ENCODE measurements at regions of chr10 and their contacts with region 1.

Region 1: GRCh38 chr10:100562008-100562711 is 26.4 kb downstream of the HIF1AN start:
- DNase-seq: peak; percentile 36 to 81
- H3K4me3 ChIP-seq: no peak overlapping the region
- H3K27ac ChIP-seq: no peak overlapping the region
- H3K4me1 ChIP-seq: peaks cover 0 to 4% (median 0%) of the 10 kb centered on the region in 4 experiments; a peak in 2 of 7 replicates
- H3K27me3 ChIP-seq: peaks cover 0 to 16% (median 9%) of the 10 kb centered on the region in 4 experiments; a peak in 5 of 7 replicates
- CTCF ChIP-seq: peak; percentile 98 to 100 (median 99)
- EP300 ChIP-seq: no peak
- POLR2A ChIP-seq: no peak; a peak in 1 of 3 replicates
- RAD21 ChIP-seq: peak; percentile 96 to 97

Region 2: GRCh38 chr10:100579261-100580090 is 17.3 kb after region 1 on chr10:
- CTCF ChIA-PET with region 1: interaction called, 40 read pairs
- POLR2A ChIA-PET with region 1: interaction called, 4 read pairs
- DNase-seq: no peak
- H3K4me3 ChIP-seq: no peak overlapping the region
- H3K27ac ChIP-seq: no peak overlapping the region
- H3K4me1 ChIP-seq: no peaks in the 10 kb centered on the region
- H3K27me3 ChIP-seq: peaks cover 0 to 4% (median 0%) of the 10 kb centered on the region in 4 experiments; a peak in 3 of 7 replicates
- CTCF ChIP-seq: no peak
- EP300 ChIP-seq: no peak
- POLR2A ChIP-seq: no peak
- RAD21 ChIP-seq: no peak

Region 3: DNA sequence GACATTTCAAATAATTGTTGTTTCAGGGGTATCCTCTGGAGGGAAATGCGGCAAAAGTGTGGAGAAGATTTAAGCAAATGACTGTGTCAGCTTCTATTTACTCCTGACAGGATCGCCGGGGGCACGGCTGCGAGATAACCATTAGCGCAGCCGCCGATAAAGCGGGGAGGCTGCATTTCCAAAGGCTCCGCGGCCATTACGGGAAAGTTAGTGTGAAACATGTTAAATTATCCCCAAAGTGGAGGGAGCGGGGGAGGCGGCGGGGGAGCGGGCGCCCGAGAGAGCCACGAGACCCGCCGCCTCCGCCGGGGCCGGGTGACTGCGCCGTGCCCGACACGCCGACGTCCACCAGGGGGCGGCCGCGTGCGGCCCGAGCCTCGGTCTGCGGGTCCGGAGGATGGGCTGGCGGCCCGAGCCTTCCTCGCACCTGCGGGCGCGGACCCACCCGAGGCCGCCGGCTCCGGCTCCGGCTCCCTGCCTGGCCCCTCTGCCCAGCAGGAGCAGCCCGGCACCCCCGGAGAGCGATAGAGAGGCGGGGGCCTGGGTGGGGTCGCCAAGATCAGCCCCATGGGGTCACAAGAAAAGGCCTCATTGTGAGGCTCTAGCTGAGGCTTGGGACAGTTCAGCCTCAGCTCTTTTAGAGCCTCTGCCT is 108.8 kb after region 1 on chr10:
- CTCF ChIA-PET with region 1: interaction called, 27 read pairs
- POLR2A ChIA-PET with region 1: no interaction called
- DNase-seq: peak in 1 of 2 experiments; percentile 94
- H3K4me3 ChIP-seq: peak overlapping the region; percentile 22 to 54 (median 36); a peak in 5 of 8 replicates
- H3K27ac ChIP-seq: no peak overlapping the region
- H3K4me1 ChIP-seq: peaks cover 4 to 15% (median 9%) of the 10 kb centered on the region in 4 experiments
- H3K27me3 ChIP-seq: peaks cover 2 to 37% (median 27%) of the 10 kb centered on the region in 4 experiments
- CTCF ChIP-seq: peak; percentile 77 to 87 (median 86)
- EP300 ChIP-seq: no peak
- POLR2A ChIP-seq: no peak
- RAD21 ChIP-seq: peak; percentile 43 to 73

Region 4: GRCh38 chr10:100737355-100738054 is 175.3 kb after region 1 on chr10:
- CTCF ChIA-PET with region 1: interaction called, 110 read pairs
- POLR2A ChIA-PET with region 1: interaction called, 18 read pairs
- DNase-seq: peak in 1 of 2 experiments; percentile 82
- H3K4me3 ChIP-seq: peak overlapping the region in 1 of 4 experiments; percentile 37; a peak in 4 of 8 replicates
- H3K27ac ChIP-seq: no peak overlapping the region
- H3K4me1 ChIP-seq: peaks cover 0 to 30% (median 24%) of the 10 kb centered on the region in 4 experiments; a peak in 6 of 7 replicates
- H3K27me3 ChIP-seq: peaks cover 92 to 100% (median 100%) of the 10 kb centered on the region in 4 experiments
- CTCF ChIP-seq: no peak
- EP300 ChIP-seq: no peak
- POLR2A ChIP-seq: no peak
- RAD21 ChIP-seq: no peak

Region 5: DNA sequence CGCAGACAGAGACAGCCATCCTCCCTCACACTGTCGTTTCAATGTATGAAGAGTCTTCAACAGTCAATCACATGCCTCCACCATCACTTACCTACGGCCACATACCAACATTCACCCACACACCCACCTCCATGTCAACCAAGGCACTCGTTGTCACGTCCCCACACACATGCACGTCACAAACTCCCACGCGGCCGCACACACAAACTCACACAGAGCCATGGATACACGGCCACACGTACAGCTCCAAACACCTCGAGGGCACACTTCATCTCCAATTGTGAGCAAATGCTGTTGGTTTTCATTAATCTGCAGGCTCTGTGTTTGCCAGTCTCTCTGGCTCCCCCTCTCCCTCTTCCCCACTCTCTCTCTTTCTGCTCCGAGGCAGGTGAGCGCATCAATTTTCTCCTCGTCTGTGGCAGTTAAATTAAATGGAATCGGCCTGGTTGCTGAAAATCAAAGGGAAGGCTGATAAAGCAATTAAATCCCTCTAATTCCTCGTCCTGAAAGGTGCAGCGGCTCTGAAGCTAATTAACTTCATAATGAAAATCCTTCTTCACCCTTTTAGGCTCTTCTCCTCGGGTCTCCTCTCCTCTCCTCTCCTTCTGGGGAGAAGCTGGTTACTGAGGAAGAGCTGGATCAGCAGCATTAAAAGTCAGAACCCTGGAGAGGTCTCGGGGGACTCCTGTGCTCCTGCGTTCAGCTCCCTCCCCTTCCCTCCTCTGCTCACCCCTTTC is 296.8 kb after region 1 on chr10:
- CTCF ChIA-PET with region 1: interaction called, 10 read pairs
- POLR2A ChIA-PET with region 1: no interaction called
- DNase-seq: no peak
- H3K4me3 ChIP-seq: no peak overlapping the region
- H3K27ac ChIP-seq: no peak overlapping the region
- H3K4me1 ChIP-seq: no peaks in the 10 kb centered on the region; a peak in 1 of 7 replicates
- H3K27me3 ChIP-seq: peaks cover 0 to 8% (median 5%) of the 10 kb centered on the region in 4 experiments; a peak in 4 of 7 replicates
- CTCF ChIP-seq: no peak
- EP300 ChIP-seq: no peak
- POLR2A ChIP-seq: no peak
- RAD21 ChIP-seq: no peak

Region 6: DNA sequence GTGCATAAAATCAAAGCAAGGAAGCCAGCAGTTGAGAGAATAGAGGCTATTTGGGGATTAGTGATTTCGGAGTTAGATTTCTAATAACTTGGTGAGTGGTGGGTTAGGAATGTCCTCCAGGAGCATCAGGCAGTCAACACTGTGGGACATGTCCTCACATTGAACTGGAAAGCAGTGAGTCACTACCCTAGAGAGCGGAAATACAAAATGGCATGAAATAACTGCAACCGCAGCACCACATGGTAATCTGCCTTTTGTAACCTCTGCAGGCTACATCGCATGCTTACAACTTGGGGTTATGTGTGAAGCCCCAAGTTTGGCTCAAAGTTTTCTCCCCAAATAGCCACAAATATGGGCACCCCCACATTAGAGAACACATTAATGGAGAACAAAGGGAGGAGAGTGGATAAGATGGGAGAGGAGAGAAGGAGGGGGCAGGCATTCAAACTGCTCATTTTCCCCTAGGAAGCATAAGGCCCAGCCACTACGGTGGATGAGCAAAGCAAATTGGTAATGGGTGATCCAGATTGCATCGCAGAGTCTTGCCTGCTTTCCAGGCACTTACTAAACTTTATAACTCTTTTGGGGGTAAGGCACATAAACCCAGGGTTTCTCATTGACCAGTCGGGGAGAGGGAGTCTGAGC is 328.6 kb after region 1 on chr10:
- CTCF ChIA-PET with region 1: interaction called, 13 read pairs
- POLR2A ChIA-PET with region 1: no interaction called
- DNase-seq: peak in 1 of 2 experiments; percentile 33
- H3K4me3 ChIP-seq: no peak overlapping the region
- H3K27ac ChIP-seq: no peak overlapping the region
- H3K4me1 ChIP-seq: peaks cover 0 to 8% (median 3%) of the 10 kb centered on the region in 4 experiments; a peak in 3 of 7 replicates
- H3K27me3 ChIP-seq: no peaks in the 10 kb centered on the region
- CTCF ChIP-seq: no peak
- EP300 ChIP-seq: no peak
- POLR2A ChIP-seq: no peak
- RAD21 ChIP-seq: no peak